HEK293 (cell line): ENCODE measurements at regions of chr14 and their contacts with region 1.

Region 1: DNA sequence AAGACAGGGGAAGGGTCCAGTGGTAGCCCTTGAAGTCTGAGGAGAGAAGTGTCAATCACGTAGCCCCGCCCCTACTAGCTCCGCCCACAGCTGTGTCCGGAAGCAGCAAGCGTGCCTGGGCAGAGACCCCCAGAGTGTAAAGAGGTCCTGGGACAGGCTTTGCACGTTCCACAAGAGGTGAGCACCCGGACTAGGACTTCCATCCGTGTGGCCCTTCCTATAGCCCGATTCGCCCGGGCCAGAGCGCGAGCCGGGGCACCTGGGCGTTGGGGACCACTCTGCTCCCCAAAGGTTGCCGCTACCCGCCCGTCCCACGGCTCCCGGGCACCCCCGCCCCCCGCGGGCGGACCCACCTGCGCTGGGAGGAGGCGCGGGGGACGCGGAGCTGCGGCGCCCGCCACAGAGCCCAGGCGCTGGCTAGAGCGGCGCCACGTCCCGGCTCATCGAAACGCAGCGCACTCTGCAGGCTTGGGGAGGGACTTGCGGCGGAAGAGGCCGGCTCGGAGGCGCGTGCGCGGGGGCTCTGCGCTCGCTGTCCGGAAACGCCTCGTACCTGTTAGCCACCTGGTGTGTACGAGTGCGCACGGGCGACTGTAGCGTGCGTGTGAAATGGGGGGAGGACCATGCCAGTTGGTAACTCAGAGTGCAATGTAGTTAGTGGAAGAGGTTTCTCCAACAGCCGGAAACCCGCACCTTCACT is at the start of gene RABGGTA:
- H3K4me3 ChIP-seq: peak within 1 kb of the TSS; percentile 92
- H3K27ac ChIP-seq: peak within 1 kb of the TSS; percentile 94
- H3K4me1 ChIP-seq: peaks cover 3% of the 10 kb centered on the region; the same call in 1 of the 2 replicates
- CTCF ChIP-seq: peak; percentile 96

Region 2: DNA sequence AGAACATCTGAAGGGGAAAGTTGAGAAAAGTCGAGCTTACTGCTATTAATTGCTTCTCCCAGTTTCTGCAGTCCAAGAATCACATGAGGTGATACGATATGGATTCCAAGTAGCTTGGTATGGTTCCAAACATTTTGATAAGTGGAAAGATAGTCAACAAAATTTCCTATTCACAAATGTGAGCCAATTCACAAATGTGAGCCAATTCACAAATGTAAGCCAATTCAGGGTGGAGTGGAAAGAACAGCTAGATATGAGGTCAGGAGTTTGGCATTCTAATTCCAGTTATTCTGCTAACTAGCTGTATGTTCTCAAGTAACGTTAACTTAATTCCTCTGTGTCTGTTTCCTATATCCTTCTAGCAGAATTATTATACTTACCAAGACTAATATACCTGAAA is 355.3 kb before region 1 on chr14:
- CTCF ChIA-PET with region 1: no interaction called
- POLR2A ChIA-PET with region 1: no interaction called
- H3K4me3 ChIP-seq: no peak overlapping the region
- H3K27ac ChIP-seq: no peak overlapping the region
- H3K4me1 ChIP-seq: no peaks in the 10 kb centered on the region
- CTCF ChIP-seq: no peak

Region 3: GRCh38 chr14:24284491-24285035 is 13.3 kb after region 1 on chr14:
- CTCF ChIA-PET with region 1: interaction called, 5 read pairs
- POLR2A ChIA-PET with region 1: interaction called, 14 read pairs
- H3K4me3 ChIP-seq: no peak overlapping the region
- H3K27ac ChIP-seq: no peak overlapping the region
- H3K4me1 ChIP-seq: no peaks in the 10 kb centered on the region
- CTCF ChIP-seq: no peak

Region 4: GRCh38 chr14:24310646-24311604 is 39.6 kb after region 1 on chr14 and contains the start of gene LTB4R:
- CTCF ChIA-PET with region 1: interaction called, 17 read pairs
- POLR2A ChIA-PET with region 1: interaction called, 9 read pairs
- H3K4me3 ChIP-seq: no peak within 1 kb of the TSS
- H3K27ac ChIP-seq: no peak within 1 kb of the TSS
- H3K4me1 ChIP-seq: no peaks in the 10 kb centered on the region
- CTCF ChIP-seq: no peak

Region 5: DNA sequence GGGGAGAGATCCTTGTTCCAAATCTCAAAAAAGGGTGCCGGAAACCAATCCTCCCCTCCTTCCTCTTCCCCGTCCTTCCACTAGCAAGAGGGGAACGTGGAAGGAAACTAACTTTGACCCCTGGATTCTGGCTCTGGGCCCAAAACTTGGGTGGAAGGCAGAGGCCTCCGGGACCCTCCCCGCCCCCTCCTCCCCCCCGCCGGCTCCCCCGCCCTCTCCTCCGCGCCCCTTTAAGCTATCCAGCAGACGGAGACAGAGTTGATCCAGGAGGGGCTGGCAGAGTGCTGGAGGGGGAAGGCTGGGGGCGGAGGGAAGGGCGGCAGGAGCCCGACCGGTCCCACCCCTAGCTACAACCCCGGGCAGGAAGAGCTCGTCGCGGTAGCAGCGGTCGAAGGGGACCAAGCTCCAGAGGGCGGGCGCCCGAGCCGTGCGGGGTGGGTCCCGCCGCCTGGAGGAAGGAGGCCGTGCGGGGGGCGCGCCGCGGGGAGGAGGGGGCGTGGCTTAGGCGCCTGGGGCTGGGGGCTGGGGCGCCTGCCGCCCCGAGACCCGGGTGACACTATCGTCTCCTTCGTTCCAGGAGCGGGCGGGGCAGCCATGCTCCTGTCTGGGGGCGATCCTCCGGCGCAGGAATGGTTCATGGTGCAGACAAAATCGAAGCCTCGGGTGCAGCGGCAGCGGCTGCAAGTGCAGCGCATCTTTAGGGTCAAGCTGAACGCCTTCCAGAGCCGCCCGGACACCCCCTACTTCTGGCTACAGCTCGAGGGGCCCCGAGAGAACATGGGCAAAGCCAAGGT is 127.6 kb after region 1 on chr14 and contains the start of gene NYNRIN:
- CTCF ChIA-PET with region 1: no interaction called
- POLR2A ChIA-PET with region 1: no interaction called
- H3K4me3 ChIP-seq: peak within 1 kb of the TSS; percentile 43
- H3K27ac ChIP-seq: peak within 1 kb of the TSS; percentile 69
- H3K4me1 ChIP-seq: peaks cover 18% of the 10 kb centered on the region; the same call in 1 of the 2 replicates
- CTCF ChIP-seq: no peak